HCT116 (cell line): ENCODE measurements at regions of chr3 and their contacts with region 1.

Region 1: DNA sequence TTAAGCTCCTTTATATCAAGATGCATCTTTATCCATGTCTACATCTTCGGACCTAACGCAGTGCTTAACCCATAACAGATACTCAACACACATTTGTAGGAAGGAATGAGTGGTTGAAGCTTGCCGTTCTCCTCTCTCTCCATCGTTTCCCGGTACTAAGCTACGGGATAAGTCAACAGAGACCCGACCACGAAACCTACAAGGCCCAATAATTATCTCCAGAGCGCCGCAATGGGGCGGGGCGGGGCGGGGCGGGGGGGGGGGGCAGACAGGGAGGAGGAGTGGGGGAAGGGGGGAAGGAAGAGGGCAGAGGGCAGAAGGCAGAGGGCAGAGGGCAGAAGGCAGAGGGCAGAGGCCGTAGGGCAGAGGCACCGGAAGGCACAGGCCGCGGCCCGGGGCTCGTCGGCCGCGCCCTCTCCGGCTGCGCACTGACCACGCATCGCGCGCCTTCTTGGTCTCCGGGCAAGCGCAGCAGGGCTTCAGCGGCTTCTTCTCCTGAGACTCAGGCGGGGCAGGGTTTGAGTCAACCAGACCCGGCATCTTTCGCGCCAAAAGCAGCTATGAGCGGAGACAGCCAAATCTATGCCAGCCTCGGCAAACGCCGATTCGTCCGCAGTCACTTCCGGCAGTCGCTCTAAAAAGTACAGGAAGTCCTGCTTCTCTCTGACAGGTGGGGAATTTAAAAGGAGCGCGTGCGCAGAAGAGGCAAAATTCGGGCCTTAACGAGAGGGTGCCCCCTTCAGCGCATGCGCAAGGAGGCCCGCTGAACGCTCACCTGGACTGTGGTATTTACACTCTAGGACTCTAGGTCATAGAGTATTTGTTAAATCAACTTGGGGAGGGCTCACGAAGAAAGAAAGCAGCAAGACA is at the start of gene COX17:
- DNase-seq: peak; percentile 96
- ATAC-seq: peak; percentile 86
- H3K4me3 ChIP-seq: peak within 1 kb of the TSS; percentile 74 to 87
- H3K27ac ChIP-seq: peak within 1 kb of the TSS; percentile 70
- H3K4me1 ChIP-seq: peaks cover 3 to 14% of the 10 kb centered on the region in 2 experiments; a peak in 3 of 4 replicates
- H3K27me3 ChIP-seq: no peaks in the 10 kb centered on the region
- CTCF ChIP-seq: no peak
- POLR2A ChIP-seq: peak; percentile 78
- RAD21 ChIP-seq: no peak
- total RNA-seq, gene COX17: 51.6 TPM

Region 2: GRCh38 chr3:118884748-118885206 is 792.2 kb before region 1 on chr3:
- CTCF ChIA-PET with region 1: interaction called, 15 read pairs
- POLR2A ChIA-PET with region 1: no interaction called
- RAD21 ChIA-PET with region 1: no interaction called
- intact Hi-C with region 1: loop called (anchors 2 kb)
- DNase-seq: peak; percentile 23
- ATAC-seq: peak; percentile 88
- H3K4me3 ChIP-seq: no peak overlapping the region
- H3K27ac ChIP-seq: no peak overlapping the region
- H3K4me1 ChIP-seq: no peaks in the 10 kb centered on the region
- H3K27me3 ChIP-seq: peaks cover 51% of the 10 kb centered on the region
- CTCF ChIP-seq: peak; percentile 95 to 99 (median 97)
- POLR2A ChIP-seq: no peak
- RAD21 ChIP-seq: peak; percentile 68

Region 3: GRCh38 chr3:119098619-119099222 is 578.3 kb before region 1 on chr3:
- CTCF ChIA-PET with region 1: interaction called, 3 read pairs
- POLR2A ChIA-PET with region 1: no interaction called
- RAD21 ChIA-PET with region 1: no interaction called
- intact Hi-C with region 1: loop called (anchors 5 kb)
- DNase-seq: peak; percentile 13
- ATAC-seq: peak; percentile 58
- H3K4me3 ChIP-seq: no peak overlapping the region
- H3K27ac ChIP-seq: no peak overlapping the region
- H3K4me1 ChIP-seq: no peaks in the 10 kb centered on the region
- H3K27me3 ChIP-seq: no peaks in the 10 kb centered on the region
- CTCF ChIP-seq: peak; percentile 56 to 80 (median 74)
- POLR2A ChIP-seq: no peak
- RAD21 ChIP-seq: peak; percentile 83

Region 4: DNA sequence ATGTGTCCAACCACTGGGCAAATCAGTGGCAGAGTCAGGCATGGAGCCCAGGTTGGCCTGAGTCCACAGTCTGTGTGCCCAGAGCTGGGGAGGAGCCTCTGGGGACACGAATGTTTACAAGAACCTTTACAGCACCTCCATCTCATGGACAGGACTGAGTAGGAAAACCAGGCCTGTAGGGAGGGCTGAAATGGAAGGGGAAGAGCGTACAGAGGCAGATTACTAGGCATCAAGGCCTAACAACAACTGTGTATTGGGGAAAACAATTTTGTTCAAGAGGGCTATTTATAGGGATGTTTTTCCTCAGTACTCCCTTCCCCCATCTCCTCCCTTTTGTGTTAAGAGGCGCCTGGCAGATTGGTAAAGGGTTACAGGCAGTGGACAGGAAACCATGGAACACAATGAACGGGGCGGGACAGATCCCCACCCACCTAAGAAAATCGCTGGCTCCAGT is 397.9 kb before region 1 on chr3:
- CTCF ChIA-PET with region 1: interaction called, 6 read pairs
- POLR2A ChIA-PET with region 1: no interaction called
- RAD21 ChIA-PET with region 1: no interaction called
- intact Hi-C with region 1: loop called (anchors 2 kb)
- DNase-seq: no peak
- ATAC-seq: peak; percentile 46
- H3K4me3 ChIP-seq: no peak overlapping the region
- H3K27ac ChIP-seq: no peak overlapping the region
- H3K4me1 ChIP-seq: no peaks in the 10 kb centered on the region
- H3K27me3 ChIP-seq: no peaks in the 10 kb centered on the region
- CTCF ChIP-seq: no peak
- POLR2A ChIP-seq: no peak
- RAD21 ChIP-seq: no peak

Region 5: GRCh38 chr3:119600732-119601131 is 76.3 kb before region 1 on chr3:
- CTCF ChIA-PET with region 1: interaction called, 3 read pairs
- POLR2A ChIA-PET with region 1: no interaction called
- RAD21 ChIA-PET with region 1: interaction called in 1 of 2 experiments, 3 read pairs
- intact Hi-C with region 1: loop called (anchors 1 kb)
- DNase-seq: peak; percentile 10
- ATAC-seq: peak; percentile 98
- H3K4me3 ChIP-seq: no peak overlapping the region
- H3K27ac ChIP-seq: no peak overlapping the region
- H3K4me1 ChIP-seq: peaks cover 0 to 16% of the 10 kb centered on the region in 2 experiments; a peak in 2 of 4 replicates
- H3K27me3 ChIP-seq: no peaks in the 10 kb centered on the region
- CTCF ChIP-seq: peak; percentile 37 to 73 (median 67); a peak in 5 of 6 replicates
- POLR2A ChIP-seq: no peak
- RAD21 ChIP-seq: peak; percentile 67

Region 6: GRCh38 chr3:119657887-119658702 is 18.9 kb before region 1 on chr3:
- CTCF ChIA-PET with region 1: no interaction called
- POLR2A ChIA-PET with region 1: no interaction called
- RAD21 ChIA-PET with region 1: no interaction called
- intact Hi-C with region 1: no loop called
- DNase-seq: no peak
- ATAC-seq: no peak
- H3K4me3 ChIP-seq: no peak overlapping the region
- H3K27ac ChIP-seq: no peak overlapping the region
- H3K4me1 ChIP-seq: 0 out of 4 replicates have a peak, but pooled peaks cover 0 to 4% of the 10 kb centered on the region in 2 experiments
- H3K27me3 ChIP-seq: no peaks in the 10 kb centered on the region; the same call in 1 of the 2 replicates
- CTCF ChIP-seq: no peak
- POLR2A ChIP-seq: no peak
- RAD21 ChIP-seq: no peak